Left ventricle myocardium inferior (tissue), 1 donor: ENCODE measurements at regions of chr2 and their contacts with region 1.

Region 1: DNA sequence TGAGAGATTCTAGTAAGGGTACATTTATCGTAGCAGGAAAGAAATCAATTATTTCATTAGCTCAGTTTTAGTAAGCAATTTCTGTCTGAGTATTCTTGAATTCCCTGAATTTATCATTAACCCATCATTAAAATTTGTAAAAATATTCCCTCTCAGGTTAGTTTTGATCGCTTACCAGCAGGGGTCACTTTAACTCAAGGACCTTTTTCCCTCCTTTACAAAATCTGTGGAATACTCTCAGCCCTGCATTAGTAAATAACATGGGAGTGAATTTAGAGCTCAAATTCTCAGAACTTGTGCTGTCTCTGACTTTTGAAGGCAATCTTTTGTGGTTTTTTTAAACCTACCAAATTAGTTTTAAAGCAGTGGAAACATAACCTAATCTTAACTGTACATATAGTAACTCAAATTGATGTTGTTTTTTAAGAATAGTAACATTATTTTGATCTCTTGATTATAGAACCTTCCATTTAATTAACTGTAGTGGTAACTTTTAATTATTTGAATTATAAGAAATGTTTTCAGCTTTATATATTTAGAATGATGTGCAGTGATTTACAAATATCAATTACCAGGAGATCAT is 97.2 kb downstream of the AGPS start:
- DNase-seq: no peak
- H3K4me3 ChIP-seq: no peak overlapping the region
- H3K27ac ChIP-seq: no peak overlapping the region
- H3K4me1 ChIP-seq: no peaks in the 10 kb centered on the region
- H3K27me3 ChIP-seq: no peaks in the 10 kb centered on the region
- CTCF ChIP-seq: peak; percentile 70

Region 2: GRCh38 chr2:177604271-177605065 is 114.7 kb after region 1 on chr2:
- intact Hi-C with region 1: loop called (anchors 10 kb)
- DNase-seq: no peak
- H3K4me3 ChIP-seq: no peak overlapping the region
- H3K27ac ChIP-seq: peak overlapping the region; percentile 45
- H3K4me1 ChIP-seq: peaks cover 1% of the 10 kb centered on the region
- H3K27me3 ChIP-seq: no peaks in the 10 kb centered on the region
- CTCF ChIP-seq: peak; percentile 78

Region 3: DNA sequence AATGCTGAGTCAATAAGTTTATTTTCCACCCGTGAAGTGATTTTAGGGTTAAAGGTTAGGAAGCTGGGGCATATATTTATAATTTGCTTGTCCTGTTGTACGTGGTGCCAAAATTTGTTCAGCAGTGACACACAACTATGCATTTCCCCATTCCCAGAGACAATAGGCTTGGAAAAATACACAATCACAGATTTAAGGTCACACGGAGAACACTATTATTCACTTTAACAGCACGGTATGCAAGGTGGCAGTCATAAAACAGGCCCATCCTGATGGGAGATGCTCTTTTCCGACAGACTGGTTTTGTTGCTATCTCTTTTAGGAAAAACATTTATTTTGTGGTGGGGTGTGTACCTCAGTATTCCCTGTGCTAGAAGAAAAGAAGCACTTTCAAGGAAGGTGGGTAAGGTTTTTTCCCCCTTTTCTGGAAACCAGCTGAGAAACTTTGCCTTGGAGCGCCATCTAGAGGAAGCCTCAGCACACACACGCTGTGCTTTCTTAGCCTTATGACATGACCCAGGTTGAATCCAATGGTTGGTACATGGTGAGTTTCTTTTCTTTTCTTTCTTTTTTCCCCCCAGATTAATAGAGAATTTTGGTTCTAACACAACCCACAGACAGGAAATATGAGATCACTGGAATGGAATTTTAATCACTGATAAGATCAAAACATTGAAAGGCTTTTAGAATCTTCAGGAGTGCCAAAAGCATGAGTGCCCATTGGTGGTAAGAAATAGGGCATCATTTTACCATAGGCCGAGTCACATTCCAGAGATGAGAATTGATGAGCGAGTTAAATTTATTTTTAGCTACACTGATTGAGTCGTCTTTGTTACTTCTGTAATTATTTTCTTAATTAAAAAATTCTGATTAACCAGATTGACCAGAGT is 234.8 kb after region 1 on chr2:
- intact Hi-C with region 1: loop called (anchors 2 kb)
- DNase-seq: peak; percentile 32
- H3K4me3 ChIP-seq: no peak overlapping the region
- H3K27ac ChIP-seq: peak overlapping the region; percentile 7
- H3K4me1 ChIP-seq: no peaks in the 10 kb centered on the region
- H3K27me3 ChIP-seq: no peaks in the 10 kb centered on the region
- CTCF ChIP-seq: peak; percentile 92

Region 4: DNA sequence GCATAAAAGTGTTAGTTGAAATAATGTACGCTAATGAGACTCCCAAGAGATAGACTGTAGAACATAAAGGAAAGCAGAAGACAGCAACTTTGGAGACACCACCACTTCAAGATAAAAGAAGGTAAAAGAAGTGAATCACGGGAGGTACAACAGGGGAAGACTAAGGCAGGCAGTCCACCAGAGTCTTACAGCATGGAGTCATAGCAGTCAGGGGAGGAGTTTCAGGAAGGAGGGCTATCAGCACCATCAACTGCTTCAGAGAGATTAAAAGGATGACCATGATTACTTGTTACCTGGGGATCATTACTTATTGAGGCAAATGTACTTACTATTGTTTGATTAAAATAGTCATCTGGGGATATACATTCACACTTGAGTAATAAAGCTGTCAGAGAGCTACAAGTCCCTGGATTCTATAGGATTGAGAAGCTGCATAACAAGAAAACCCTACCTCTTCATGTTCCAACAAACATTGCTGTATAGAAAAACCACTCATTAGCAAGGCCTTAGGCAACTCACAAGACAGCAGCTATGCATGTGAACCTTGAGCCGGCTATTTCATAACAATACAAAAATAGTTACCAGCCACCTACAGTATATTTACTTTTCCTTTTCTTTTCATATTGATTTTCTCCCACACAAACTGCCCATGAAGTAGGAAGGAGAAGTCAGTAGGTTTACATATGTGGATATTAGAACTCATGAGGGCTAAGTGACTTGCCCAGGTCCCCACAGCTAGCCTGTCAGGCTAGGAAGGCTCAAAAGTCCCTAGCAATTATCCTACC is 481.1 kb after region 1 on chr2:
- intact Hi-C with region 1: no loop called
- DNase-seq: no peak
- H3K4me3 ChIP-seq: no peak overlapping the region
- H3K27ac ChIP-seq: no peak overlapping the region
- H3K4me1 ChIP-seq: no peaks in the 10 kb centered on the region
- H3K27me3 ChIP-seq: no peaks in the 10 kb centered on the region
- CTCF ChIP-seq: no peak